Activated CD4-positive, alpha-beta T cell treated with anti-CD3 and anti-CD28 coated beads, Interleukin-2, amount 10 ng/mL, durations not matched to agents 7 days and 5 days (primary cell): ENCODE measurements at regions of chr3 and their contacts with region 1.

Region 1: GRCh38 chr3:139329345-139329850 is 14.4 kb upstream of the MRPS22 start:
- DNase-seq: peak; percentile 86
- H3K4me3 Mint-ChIP-seq: peak overlapping the region; percentile 67
- H3K27ac Mint-ChIP-seq: no peak overlapping the region
- H3K4me1 Mint-ChIP-seq: peaks cover 21% of the 10 kb centered on the region
- H3K27me3 Mint-ChIP-seq: peaks cover 22% of the 10 kb centered on the region

Region 2: DNA sequence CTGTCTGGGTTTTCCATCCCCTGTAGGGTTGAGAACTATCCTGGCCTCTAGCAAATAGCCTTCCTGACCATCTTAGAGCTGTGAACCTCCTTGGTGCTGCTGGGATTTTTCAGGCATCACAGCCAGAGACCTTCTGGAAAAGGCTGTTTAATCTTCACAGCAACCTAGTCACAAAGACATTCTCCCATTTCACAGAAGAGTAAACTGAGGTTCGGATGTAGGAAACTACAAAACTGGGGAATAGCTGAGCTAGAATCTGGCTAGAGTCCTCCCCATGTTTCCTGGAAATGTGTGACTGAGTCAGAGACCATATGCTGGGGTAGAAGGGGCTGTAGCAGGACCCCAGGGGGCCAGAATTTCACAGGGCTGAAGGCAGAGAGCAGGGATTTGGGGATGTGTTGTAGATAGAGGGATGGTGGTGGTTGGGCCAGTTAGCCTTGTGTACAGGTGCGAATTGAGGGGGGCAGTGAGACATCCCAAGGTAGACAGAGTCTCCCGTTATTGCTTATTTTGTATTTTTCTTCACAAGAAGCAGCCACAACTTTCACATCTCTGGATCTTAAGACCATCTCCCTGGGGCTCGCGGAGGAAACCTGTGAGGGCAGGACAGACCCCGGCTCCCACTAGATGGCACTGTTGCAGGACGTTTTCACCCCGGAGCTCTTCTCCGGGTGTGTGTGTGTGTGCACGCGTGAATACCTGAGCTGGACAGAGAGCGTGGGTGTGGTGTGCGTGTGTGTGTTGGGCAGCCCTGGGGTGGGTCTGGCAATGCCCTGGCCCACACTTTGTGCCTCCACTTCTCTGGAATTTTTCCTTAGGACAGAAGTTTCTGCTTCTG is 217.8 kb before region 1 on chr3:
- CTCF ChIA-PET with region 1: interaction called, 12 read pairs
- POLR2A ChIA-PET with region 1: no interaction called
- DNase-seq: peak; percentile 64
- H3K4me3 Mint-ChIP-seq: no peak overlapping the region
- H3K27ac Mint-ChIP-seq: no peak overlapping the region
- H3K4me1 Mint-ChIP-seq: peaks cover 16% of the 10 kb centered on the region
- H3K27me3 Mint-ChIP-seq: peaks cover 8% of the 10 kb centered on the region

Region 3: DNA sequence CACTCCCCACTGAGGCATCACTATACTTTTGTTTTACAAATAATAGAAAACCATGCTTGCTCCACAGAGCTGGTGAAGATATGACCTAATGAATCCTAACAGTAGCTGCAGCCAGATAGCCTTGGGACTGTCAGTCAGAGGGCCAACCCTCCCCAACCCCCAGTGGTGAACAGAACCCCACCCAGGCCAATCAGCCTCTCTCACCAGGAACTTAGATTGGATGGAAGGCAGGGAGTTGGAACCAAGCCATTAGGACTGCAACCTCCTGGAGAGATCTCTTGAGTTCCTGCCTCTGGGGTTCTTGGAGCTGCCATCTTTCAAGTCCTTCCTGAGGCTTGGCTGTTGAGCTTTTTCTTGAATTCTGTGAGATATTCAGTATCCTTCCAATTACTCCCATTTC is 11.4 kb after region 1 on chr3:
- CTCF ChIA-PET with region 1: interaction called, 13 read pairs
- POLR2A ChIA-PET with region 1: no interaction called
- DNase-seq: no peak
- H3K4me3 Mint-ChIP-seq: no peak overlapping the region
- H3K27ac Mint-ChIP-seq: no peak overlapping the region
- H3K4me1 Mint-ChIP-seq: peaks cover 9% of the 10 kb centered on the region
- H3K27me3 Mint-ChIP-seq: peaks cover 10% of the 10 kb centered on the region